ENCODE measurements at regions of chr7 and their contacts with region 1.

Region 1: GRCh38 chr7:30800785-30801252 is 29.6 kb downstream of the MINDY4 start:
- DNase-seq: peak in 5 of 9 experiments; percentile 14 to 61 (median 47)
- ATAC-seq: no peak
- H3K4me3 ChIP-seq: no peak overlapping the region
- H3K4me3 Mint-ChIP-seq: no peak overlapping the region
- H3K27ac ChIP-seq: no peak overlapping the region
- H3K27ac Mint-ChIP-seq: no peak overlapping the region
- H3K4me1 ChIP-seq: peaks cover 13% of the 10 kb centered on the region
- H3K4me1 Mint-ChIP-seq: peaks cover 11% of the 10 kb centered on the region
- H3K27me3 ChIP-seq: no peaks in the 10 kb centered on the region
- H3K27me3 Mint-ChIP-seq: no peaks in the 10 kb centered on the region
- CTCF ChIP-seq: peak; percentile 37

Region 2: DNA sequence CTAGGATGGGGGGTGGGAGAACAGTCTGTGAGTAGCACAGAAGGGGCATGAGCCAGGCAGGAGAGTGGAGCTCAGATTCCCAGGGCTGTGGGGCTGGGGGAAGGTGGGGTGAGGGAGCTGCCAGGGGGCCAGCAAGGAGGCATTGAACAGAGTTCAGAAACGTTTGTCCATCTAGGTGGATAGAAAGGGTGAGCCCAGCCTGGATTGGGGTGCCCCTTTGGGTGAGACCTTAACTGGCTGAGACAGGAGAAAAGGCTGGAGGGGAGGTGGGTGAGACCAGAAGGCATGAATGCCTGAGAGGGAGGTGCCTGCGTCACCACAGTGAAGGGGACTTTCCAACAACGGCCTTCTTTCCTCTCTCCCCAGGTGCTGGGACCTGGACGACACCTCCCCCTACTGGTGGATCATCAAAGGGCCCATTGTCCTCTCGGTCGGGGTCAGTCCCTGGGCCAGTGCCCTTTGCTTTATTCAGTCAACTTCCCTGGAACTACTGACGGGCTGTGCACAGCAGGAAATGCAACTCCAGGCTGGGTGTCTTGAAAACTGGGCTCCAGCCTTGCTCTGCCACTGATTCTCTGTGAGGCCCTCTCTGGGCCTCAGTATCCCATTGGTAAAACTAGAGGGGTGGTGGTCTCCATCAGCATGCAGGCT is 173.9 kb after region 1 on chr7:
- CTCF ChIA-PET with region 1: interaction called, 3 read pairs
- POLR2A ChIA-PET with region 1: no interaction called
- intact Hi-C with region 1: loop called in 1 of 2 experiments (anchors 2 kb)
- DNase-seq: peak in 3 of 9 experiments; percentile 33 to 50 (median 45)
- ATAC-seq: peak; percentile 55
- H3K4me3 ChIP-seq: no peak overlapping the region
- H3K4me3 Mint-ChIP-seq: no peak overlapping the region
- H3K27ac ChIP-seq: no peak overlapping the region
- H3K27ac Mint-ChIP-seq: no peak overlapping the region
- H3K4me1 ChIP-seq: no peaks in the 10 kb centered on the region
- H3K4me1 Mint-ChIP-seq: peaks cover 4% of the 10 kb centered on the region
- H3K27me3 ChIP-seq: no peaks in the 10 kb centered on the region
- H3K27me3 Mint-ChIP-seq: peaks cover 48% of the 10 kb centered on the region
- CTCF ChIP-seq: no peak

Region 3: DNA sequence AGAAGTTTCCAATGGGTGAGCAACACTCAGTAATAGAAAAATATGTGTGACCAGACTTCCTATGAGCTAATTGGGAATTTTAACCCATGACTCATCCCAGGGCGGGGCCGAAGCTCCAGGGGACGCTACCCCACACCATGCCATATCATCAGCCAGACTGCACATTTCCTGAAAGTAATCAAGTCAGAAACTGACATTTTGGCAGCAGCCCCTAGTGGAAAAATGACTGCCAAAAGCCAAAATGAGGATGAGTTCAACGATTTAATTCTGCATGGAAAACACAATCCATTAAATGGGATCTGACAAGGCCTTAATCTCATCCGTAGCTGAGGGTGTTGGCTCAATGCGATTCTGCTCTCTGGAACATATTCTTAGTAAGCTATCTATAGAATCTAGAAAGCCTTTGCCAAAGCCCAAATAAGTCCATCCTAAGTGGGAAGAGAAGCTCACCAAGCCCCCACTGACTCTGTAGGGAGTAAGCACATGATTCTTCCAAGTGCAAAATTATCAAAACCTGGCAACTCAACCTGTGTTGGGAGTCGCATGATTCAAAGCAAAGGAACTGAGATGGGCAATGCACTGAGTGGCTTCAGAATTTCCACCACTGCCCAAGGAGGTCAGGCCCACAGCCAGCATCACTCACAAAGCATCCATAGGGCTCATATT is 1362.5 kb after region 1 on chr7:
- CTCF ChIA-PET with region 1: no interaction called
- POLR2A ChIA-PET with region 1: no interaction called
- intact Hi-C with region 1: no loop called
- DNase-seq: no peak
- ATAC-seq: no peak
- H3K4me3 ChIP-seq: no peak overlapping the region
- H3K4me3 Mint-ChIP-seq: no peak overlapping the region
- H3K27ac ChIP-seq: no peak overlapping the region
- H3K27ac Mint-ChIP-seq: no peak overlapping the region
- H3K4me1 ChIP-seq: no peaks in the 10 kb centered on the region
- H3K4me1 Mint-ChIP-seq: no peaks in the 10 kb centered on the region
- H3K27me3 ChIP-seq: no peaks in the 10 kb centered on the region
- H3K27me3 Mint-ChIP-seq: no peaks in the 10 kb centered on the region
- CTCF ChIP-seq: no peak

Measured in CD8-positive, alpha-beta T cell (primary cell).